AG04449 (cell line): ENCODE measurements at regions of chr15 and their contacts with region 1.

Region 1: GRCh38 chr15:84833447-84834228 is 16.5 kb downstream of the ALPK3 start:
- DNase-seq: no peak
- H3K4me3 ChIP-seq: no peak overlapping the region
- CTCF ChIP-seq: no peak

Region 2: DNA sequence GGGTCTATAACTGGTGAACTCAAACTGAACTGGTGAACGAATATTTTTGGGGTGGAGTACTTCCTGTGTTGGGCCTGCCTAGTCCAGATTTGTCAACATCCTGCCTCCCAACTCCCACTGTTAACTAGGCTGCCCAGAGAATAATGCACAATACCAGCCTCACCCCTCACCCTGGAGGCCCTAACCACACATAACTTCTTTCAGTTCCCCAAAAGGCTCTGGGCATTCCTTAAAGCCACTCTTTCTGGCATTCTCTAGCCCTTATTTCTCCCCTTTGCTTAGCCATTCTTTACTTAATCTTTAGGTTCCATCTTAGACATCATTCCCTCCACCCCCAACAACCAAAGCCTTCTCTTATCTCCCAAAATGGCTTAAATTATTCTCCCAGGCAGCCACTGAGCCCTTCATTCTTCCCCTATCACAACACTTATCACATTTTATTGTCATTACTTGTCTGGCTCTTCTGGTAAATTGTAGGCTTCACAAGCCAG is 108.6 kb before region 1 on chr15:
- CTCF ChIA-PET with region 1: no interaction called
- POLR2A ChIA-PET with region 1: no interaction called
- DNase-seq: no peak
- H3K4me3 ChIP-seq: no peak overlapping the region
- CTCF ChIP-seq: no peak

Region 3: GRCh38 chr15:84844964-84845363 is 11.3 kb after region 1 on chr15:
- CTCF ChIA-PET with region 1: interaction called, 19 read pairs
- POLR2A ChIA-PET with region 1: no interaction called
- DNase-seq: no peak
- H3K4me3 ChIP-seq: no peak overlapping the region
- CTCF ChIP-seq: no peak